AG04450 (cell line): ENCODE measurements at regions of chr11 and their contacts with region 1.

Region 1: DNA sequence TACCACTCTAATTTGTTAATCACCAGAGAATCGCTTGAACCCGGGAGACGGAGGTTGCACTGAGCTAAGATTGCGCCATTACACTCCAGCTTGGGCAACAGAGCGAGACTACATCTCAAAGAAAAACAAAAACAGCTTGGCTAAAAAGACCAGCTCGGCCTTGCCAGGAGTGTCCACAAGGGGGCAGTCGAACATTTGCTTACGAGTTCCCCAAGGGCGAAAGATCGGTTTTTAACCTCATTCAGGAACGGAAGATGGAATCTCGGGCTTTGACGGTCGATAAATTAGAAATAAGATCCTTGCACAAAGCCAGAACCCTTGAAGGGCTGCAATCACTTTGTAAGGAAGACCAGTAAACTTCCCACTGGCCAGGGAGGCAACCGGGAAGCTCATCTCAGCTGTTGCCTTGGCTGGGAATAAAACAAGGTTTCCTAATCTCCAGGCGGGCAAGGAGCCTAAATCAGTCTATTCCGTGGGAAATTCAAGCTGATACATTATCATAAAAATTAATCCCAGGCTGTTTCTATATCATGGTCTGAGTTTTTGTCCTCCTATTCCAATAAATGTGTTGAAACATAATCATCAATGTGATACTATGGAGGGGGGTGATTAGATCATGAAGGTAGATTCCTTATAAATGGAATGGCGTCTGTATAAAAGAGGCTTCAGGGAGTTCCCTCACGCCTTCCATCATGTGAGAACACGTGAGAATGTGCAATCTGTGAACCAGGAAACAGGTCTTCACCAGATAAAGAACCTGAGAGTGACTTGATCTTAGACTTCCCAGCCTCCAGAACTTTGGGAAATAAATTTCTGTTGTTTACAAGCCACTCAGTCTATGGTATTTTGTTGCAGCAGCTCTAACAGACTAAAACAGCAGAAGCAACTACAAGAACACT is 14.9 kb upstream of the SLC29A2 start:
- DNase-seq: peak; percentile 66
- H3K4me3 ChIP-seq: peak overlapping the region; percentile 41
- H3K27ac ChIP-seq: no peak overlapping the region
- H3K27me3 ChIP-seq: no peaks in the 10 kb centered on the region
- CTCF ChIP-seq: peak; percentile 95

Region 2: DNA sequence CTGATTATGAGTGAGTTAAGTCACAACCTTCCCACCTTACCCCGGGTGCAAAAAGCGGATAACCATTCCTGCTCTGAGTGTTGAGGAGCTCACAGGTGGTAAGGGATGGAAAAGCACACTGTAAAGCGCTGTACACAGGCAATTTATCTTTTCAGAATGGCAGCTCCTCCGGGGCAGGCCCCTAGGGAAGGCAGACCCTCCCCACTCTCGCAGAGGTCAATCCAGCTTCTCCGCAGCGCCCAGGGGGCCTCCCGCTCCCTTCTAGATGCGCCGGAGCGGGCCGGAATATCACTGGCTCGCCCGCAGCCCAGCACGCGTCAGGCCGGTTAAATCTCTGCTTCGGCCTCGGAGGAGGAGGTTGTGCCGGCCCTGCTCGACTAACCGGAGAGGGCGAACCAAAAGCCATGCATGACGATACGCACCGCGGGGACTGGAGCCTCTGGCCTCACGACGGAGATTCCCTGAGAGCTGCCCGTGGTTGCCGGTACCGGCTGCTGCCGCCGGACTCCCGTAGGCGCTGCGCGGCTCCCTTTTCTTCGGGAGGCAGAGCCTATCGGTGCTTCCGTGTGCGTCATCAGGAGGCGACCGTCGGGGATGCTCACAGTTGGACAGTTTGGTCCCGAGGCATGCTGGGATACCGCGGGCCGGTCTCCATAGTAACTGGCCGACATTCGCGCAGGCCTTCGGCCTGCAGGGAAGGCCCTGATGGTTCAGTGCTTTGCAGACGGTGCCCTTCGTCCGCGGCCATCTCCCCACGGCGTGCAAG is 41.7 kb before region 1 on chr11 and contains the start of gene BRMS1:
- CTCF ChIA-PET with region 1: interaction called, 14 read pairs
- POLR2A ChIA-PET with region 1: interaction called, 3 read pairs
- DNase-seq: peak; percentile 87
- H3K4me3 ChIP-seq: peak within 1 kb of the TSS; percentile 99
- H3K27ac ChIP-seq: peak within 1 kb of the TSS; percentile 65
- H3K27me3 ChIP-seq: no peaks in the 10 kb centered on the region
- CTCF ChIP-seq: peak; percentile 13
- polyA plus RNA-seq, gene BRMS1: 35.2 and 39.3 TPM in 2 replicates

Region 3: GRCh38 chr11:66371627-66372415 is 14.6 kb before region 1 on chr11 and contains the start of gene SLC29A2:
- CTCF ChIA-PET with region 1: interaction called, 17 read pairs
- POLR2A ChIA-PET with region 1: no interaction called
- DNase-seq: no peak
- H3K4me3 ChIP-seq: peak within 1 kb of the TSS; percentile 61
- H3K27ac ChIP-seq: no peak within 1 kb of the TSS
- H3K27me3 ChIP-seq: peaks cover 14% of the 10 kb centered on the region
- CTCF ChIP-seq: no peak
- polyA plus RNA-seq, gene SLC29A2: 0.16 and 0.46 TPM in 2 replicates

Region 4: DNA sequence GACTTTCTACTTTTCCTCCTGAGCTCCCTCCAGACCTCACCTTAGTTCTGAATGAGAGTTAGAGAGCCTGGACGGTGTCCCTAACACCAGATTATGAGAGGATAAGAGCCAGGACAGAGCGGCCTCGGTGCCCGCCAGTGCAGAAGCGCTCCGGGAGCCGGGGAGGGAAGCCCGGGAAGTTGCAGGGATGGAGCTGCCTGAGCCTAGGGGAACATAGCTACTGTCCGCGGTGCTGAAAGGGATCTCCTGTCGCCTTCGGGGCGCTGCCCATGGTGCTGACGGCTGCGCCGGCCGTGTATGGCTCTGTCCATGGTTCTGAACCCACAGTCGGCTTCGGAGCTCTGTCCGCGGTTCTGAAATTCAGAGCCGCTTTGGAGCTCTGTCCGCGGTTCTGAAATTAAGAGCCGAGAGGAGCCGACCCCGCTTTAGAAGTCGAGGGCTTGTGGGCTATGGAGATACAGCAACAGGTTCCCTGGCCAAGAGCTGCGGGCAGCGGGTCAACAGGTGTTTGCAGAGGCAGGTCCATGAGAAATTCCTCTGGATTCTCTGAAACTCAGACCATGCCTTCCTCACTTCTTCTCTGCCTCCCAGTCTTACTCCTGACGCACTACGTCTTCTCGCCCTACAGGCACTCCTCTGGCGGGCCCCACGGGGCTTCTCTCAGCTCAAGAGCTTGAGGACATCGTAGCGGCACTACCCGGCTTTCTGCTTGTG is 35.2 kb after region 1 on chr11:
- CTCF ChIA-PET with region 1: interaction called, 16 read pairs
- POLR2A ChIA-PET with region 1: no interaction called
- DNase-seq: peak; percentile 77
- H3K4me3 ChIP-seq: no peak overlapping the region
- H3K27ac ChIP-seq: no peak overlapping the region
- H3K27me3 ChIP-seq: peaks cover 18% of the 10 kb centered on the region
- CTCF ChIP-seq: no peak

Region 5: GRCh38 chr11:66438504-66439466 is 52.4 kb after region 1 on chr11 and contains the start of gene MRPL11:
- CTCF ChIA-PET with region 1: interaction called, 10 read pairs
- POLR2A ChIA-PET with region 1: no interaction called
- DNase-seq: peak; percentile 80
- H3K4me3 ChIP-seq: peak within 1 kb of the TSS; percentile 81
- H3K27ac ChIP-seq: no peak within 1 kb of the TSS
- H3K27me3 ChIP-seq: no peaks in the 10 kb centered on the region
- CTCF ChIP-seq: peak; percentile 69
- polyA plus RNA-seq, gene MRPL11: 43.1 and 55.1 TPM in 2 replicates